IMR-90 (cell line): ENCODE measurements at regions of chr7 and their contacts with region 1.

Region 1: GRCh38 chr7:992709-993607 is 10.0 kb downstream of the CYP2W1 start:
- DNase-seq: peak; percentile 95
- ATAC-seq: peak; percentile 96
- H3K4me3 ChIP-seq: no peak overlapping the region
- H3K27ac ChIP-seq: no peak overlapping the region
- H3K4me1 ChIP-seq: no peaks in the 10 kb centered on the region
- H3K27me3 ChIP-seq: no peaks in the 10 kb centered on the region
- CTCF ChIP-seq: peak; percentile 100
- POLR2A ChIP-seq: 0 out of 2 replicates have a peak, but pooled peaks have one; percentile 45
- RAD21 ChIP-seq: peak; percentile 96

Region 2: DNA sequence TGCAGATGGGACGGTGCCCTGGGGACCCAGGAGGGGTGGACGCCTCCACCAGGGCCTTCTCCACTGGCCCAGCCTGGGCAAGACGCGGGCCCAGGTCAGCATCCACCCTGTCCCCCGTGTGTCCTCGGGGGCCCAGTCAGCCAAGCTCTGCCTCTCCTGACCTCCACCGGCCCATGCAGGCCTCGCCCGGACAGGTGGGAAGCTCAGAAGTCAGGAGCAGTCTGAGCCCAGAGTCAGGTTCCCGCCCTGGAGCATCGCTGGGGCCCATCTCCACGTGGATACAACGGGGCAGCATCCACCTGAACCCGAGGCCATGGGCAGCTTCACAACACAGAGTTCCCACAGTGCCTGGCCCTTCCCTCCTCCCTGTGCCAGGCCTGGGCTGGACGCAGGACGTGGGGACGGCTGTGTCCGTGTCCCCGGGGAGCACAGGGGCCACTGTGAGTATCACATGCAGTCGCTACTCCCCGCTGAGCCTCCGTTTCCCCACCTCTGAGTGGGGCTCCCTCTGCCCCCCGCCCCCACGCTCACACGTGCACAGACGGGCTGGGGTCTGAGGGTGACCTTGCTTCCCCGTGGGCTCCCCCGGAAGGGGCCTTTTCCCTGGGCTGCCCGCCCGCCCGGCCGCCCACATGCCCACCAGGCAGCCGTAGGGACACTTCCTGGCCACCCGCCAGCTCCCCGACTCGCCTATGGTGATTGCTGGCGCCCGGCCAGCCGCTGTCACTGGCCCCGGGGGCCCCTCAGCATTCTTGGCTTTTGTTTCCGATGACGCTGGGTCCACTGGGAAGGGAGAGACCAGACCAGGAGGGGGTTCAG is 537.6 kb before region 1 on chr7:
- CTCF ChIA-PET with region 1: no interaction called
- POLR2A ChIA-PET with region 1: no interaction called
- dilution Hi-C with region 1: no loop called
- in situ Hi-C with region 1: no loop called
- intact Hi-C with region 1: no loop called
- DNase-seq: no peak
- ATAC-seq: no peak
- H3K4me3 ChIP-seq: no peak overlapping the region
- H3K27ac ChIP-seq: no peak overlapping the region
- H3K4me1 ChIP-seq: peaks cover 10% of the 10 kb centered on the region
- H3K27me3 ChIP-seq: peaks cover 22% of the 10 kb centered on the region
- CTCF ChIP-seq: no peak
- POLR2A ChIP-seq: no peak
- RAD21 ChIP-seq: no peak

Region 3: DNA sequence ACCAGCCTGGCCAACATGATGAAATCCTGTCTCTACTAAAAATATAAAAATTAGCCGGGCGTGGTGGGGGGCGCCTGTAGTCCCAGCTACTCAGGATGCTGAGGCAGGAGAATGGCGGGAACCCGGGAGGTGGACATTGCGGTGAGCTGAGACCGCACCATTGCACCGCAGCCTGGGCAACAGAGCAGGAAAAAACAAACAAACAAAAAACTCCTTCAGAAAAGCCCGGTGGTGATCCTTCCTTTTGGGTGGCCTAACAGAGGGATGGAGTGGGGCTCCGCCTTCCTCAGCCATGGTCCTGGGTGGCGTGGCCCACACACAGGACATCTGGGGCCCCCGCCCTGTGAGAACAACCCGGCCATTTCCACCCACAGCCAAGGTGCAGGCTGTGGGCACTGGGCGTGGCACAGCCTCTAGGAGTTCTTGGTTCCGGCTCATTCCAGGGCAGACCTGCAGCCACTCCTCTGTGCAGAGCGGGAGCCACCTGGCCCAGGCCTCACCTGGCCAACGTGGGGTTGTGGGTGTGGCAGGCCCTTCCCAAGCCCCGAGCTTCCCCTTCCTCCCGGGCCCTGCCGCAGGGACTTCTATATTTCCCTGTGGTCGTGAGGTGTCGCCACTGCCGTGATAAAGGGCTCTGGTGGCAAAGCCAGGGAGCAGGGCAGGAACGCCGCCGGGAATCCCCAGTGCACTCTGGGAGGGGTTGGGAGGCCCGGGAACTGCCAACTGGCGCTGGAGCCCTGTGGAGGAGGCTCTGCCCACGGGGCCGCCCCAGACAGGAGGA is 79.0 kb before region 1 on chr7:
- CTCF ChIA-PET with region 1: no interaction called
- POLR2A ChIA-PET with region 1: no interaction called
- dilution Hi-C with region 1: no loop called
- in situ Hi-C with region 1: no loop called
- intact Hi-C with region 1: no loop called
- DNase-seq: no peak
- ATAC-seq: no peak
- H3K4me3 ChIP-seq: no peak overlapping the region
- H3K27ac ChIP-seq: no peak overlapping the region
- H3K4me1 ChIP-seq: 0 out of 2 replicates have a peak, but pooled peaks cover 1% of the 10 kb centered on the region
- H3K27me3 ChIP-seq: no peaks in the 10 kb centered on the region
- CTCF ChIP-seq: no peak
- POLR2A ChIP-seq: no peak
- RAD21 ChIP-seq: no peak

Region 4: DNA sequence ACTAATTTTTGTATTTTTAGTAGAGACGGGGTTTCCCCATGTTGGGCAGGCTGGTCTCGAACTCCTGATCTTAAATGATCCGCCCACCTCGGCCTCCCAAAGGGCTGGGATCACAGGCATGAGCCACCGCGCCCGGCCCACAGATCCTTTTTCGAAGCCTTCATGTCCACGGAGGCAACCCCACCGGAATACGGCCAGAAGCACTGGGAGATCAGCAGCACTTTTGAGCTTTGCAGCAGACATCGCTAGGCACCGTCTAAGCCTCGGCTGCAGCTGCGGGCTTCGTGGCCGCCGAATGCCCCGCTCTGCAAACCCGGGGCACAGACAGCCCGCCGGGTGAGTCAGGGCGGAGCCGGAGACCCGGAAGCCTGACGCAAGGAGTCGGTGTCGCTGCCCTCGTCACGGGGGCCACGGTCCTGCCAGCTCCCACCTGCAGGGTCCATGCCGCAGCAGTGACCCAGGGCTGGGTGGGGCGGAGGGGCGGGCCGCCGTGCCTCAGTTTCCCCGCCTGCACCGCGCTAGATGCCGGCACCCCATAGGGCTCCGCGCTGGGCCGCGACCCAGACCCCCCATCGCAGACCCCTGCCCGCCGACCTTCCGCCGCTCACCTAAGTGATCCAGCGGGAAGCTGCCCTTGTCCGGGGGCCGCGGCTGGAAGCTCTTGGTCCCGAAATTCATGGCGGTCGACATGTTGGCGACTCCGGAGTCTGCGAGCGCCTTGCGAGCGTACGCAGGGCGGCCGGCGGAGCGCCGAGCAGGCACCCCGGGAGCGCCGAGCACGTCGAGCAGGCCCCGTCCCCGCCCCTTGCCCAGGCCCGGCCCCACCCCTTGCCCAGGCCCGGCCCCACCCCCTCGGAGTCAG is 17.9 kb before region 1 on chr7 and contains the start of gene COX19:
- CTCF ChIA-PET with region 1: interaction called, 11 read pairs
- POLR2A ChIA-PET with region 1: no interaction called
- dilution Hi-C with region 1: no loop called
- in situ Hi-C with region 1: no loop called
- intact Hi-C with region 1: no loop called
- DNase-seq: peak; percentile 87
- ATAC-seq: peak; percentile 99
- H3K4me3 ChIP-seq: peak within 1 kb of the TSS; percentile 89
- H3K27ac ChIP-seq: peak within 1 kb of the TSS; percentile 87
- H3K4me1 ChIP-seq: peaks cover 4% of the 10 kb centered on the region
- H3K27me3 ChIP-seq: no peaks in the 10 kb centered on the region
- CTCF ChIP-seq: no peak
- POLR2A ChIP-seq: peak; percentile 85
- RAD21 ChIP-seq: no peak
- total RNA-seq, gene COX19: 3.9 and 6.4 TPM in 2 replicates

Region 5: GRCh38 chr7:1059200-1060091 is 66.5 kb after region 1 on chr7:
- CTCF ChIA-PET with region 1: interaction called, 60 read pairs
- POLR2A ChIA-PET with region 1: no interaction called
- dilution Hi-C with region 1: no loop called
- in situ Hi-C with region 1: loop called (anchors 5 kb)
- intact Hi-C with region 1: no loop called
- DNase-seq: no peak
- ATAC-seq: no peak; the same call in 1 of the 2 replicates
- H3K4me3 ChIP-seq: no peak overlapping the region
- H3K27ac ChIP-seq: no peak overlapping the region
- H3K4me1 ChIP-seq: peaks cover 8% of the 10 kb centered on the region; the same call in 1 of the 2 replicates
- H3K27me3 ChIP-seq: no peaks in the 10 kb centered on the region; the same call in 1 of the 2 replicates
- CTCF ChIP-seq: no peak
- POLR2A ChIP-seq: no peak
- RAD21 ChIP-seq: no peak

Region 6: GRCh38 chr7:1065263-1066260 is 72.6 kb after region 1 on chr7:
- CTCF ChIA-PET with region 1: interaction called, 60 read pairs
- POLR2A ChIA-PET with region 1: no interaction called
- dilution Hi-C with region 1: no loop called
- in situ Hi-C with region 1: loop called (anchors 5 kb)
- intact Hi-C with region 1: loop called (anchors 1 kb)
- DNase-seq: peak; percentile 58
- ATAC-seq: peak; percentile 98
- H3K4me3 ChIP-seq: no peak overlapping the region
- H3K27ac ChIP-seq: no peak overlapping the region
- H3K4me1 ChIP-seq: peaks cover 2% of the 10 kb centered on the region; the same call in 1 of the 2 replicates
- H3K27me3 ChIP-seq: no peaks in the 10 kb centered on the region; the same call in 1 of the 2 replicates
- CTCF ChIP-seq: peak; percentile 97
- POLR2A ChIP-seq: no peak
- RAD21 ChIP-seq: peak; percentile 97

Region 7: DNA sequence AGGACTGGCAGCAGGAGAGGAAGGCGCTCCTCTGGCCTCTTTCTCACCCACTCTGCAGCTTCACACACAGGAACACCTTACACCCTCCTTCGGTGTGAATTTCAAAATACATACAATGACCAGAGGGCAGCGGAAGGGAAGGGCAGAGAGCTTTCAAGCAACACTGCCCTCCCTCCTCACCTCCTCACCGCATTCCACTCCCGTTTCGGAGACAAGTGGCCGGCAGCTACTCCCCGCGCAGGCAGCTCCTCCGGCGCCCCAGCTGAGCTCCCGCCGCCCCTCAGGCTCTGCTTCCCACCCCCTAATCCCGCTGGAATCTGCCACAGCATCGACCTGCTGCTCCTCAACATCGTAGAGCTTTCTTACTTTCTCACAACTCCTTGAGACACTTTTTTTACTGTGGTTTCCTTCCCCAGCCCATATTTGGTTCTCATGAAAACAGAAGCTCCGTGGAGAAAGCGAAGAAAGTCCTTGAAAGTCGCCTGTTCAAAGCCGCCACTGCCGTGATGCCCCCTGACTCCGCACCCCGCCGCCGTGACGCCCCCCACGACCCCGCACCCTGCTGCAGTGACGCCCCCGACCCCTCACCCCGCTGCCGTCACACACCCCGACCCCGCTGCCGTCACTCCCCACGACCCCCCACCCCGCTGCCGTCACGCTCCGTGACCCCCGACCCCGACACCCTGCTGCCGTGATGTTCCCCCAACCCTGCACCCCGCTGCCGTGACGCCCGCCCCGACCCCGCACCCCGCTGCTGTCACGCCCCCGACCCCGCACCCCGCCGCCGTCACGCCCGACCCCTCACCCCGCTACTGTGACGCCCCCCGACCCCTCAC is 80.4 kb after region 1 on chr7:
- CTCF ChIA-PET with region 1: interaction called, 12 read pairs
- POLR2A ChIA-PET with region 1: no interaction called
- dilution Hi-C with region 1: no loop called
- in situ Hi-C with region 1: no loop called
- intact Hi-C with region 1: no loop called
- DNase-seq: no peak
- ATAC-seq: no peak
- H3K4me3 ChIP-seq: no peak overlapping the region
- H3K27ac ChIP-seq: no peak overlapping the region
- H3K4me1 ChIP-seq: no peaks in the 10 kb centered on the region
- H3K27me3 ChIP-seq: no peaks in the 10 kb centered on the region
- CTCF ChIP-seq: no peak
- POLR2A ChIP-seq: no peak
- RAD21 ChIP-seq: no peak

Region 8: DNA sequence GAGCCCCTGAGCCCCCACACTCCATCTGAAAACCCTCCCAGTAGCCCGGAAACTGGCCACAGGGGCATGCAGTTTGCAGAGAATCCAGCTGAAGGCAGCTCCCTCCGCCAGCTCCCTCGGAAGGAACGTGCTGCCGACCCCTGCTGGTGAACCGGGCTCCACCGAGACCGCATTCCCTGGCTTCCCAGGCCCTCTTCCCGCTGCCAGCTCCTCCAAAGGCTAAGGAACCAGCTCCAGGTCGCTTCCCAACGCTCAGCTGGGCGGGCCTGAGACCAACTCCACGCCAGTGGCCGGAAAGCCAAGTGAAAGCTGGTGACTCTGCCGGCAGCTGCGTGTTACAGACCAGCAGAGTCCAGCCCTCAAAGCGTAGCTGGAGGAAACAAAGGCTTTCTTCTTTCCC is 130.8 kb after region 1 on chr7:
- CTCF ChIA-PET with region 1: no interaction called
- POLR2A ChIA-PET with region 1: no interaction called
- dilution Hi-C with region 1: no loop called
- in situ Hi-C with region 1: no loop called
- intact Hi-C with region 1: loop called (anchors 2 kb)
- DNase-seq: peak; percentile 79
- ATAC-seq: peak; percentile 96
- H3K4me3 ChIP-seq: no peak overlapping the region
- H3K27ac ChIP-seq: peak overlapping the region; percentile 10; the same call in 1 of the 2 replicates
- H3K4me1 ChIP-seq: peaks cover 3% of the 10 kb centered on the region
- H3K27me3 ChIP-seq: no peaks in the 10 kb centered on the region
- CTCF ChIP-seq: peak; percentile 69
- POLR2A ChIP-seq: no peak
- RAD21 ChIP-seq: peak; percentile 56

Region 9: GRCh38 chr7:1175967-1176851 is 183.3 kb after region 1 on chr7:
- CTCF ChIA-PET with region 1: interaction called, 3 read pairs
- POLR2A ChIA-PET with region 1: no interaction called
- dilution Hi-C with region 1: no loop called
- in situ Hi-C with region 1: loop called (anchors 10 kb)
- intact Hi-C with region 1: loop called (anchors 1 kb)
- DNase-seq: peak; percentile 52
- ATAC-seq: peak; percentile 96
- H3K4me3 ChIP-seq: no peak overlapping the region
- H3K27ac ChIP-seq: no peak overlapping the region
- H3K4me1 ChIP-seq: 0 out of 2 replicates have a peak, but pooled peaks cover 2% of the 10 kb centered on the region
- H3K27me3 ChIP-seq: peaks cover 2% of the 10 kb centered on the region; the same call in 1 of the 2 replicates
- CTCF ChIP-seq: peak; percentile 86
- POLR2A ChIP-seq: no peak
- RAD21 ChIP-seq: peak; percentile 66

Region 10: DNA sequence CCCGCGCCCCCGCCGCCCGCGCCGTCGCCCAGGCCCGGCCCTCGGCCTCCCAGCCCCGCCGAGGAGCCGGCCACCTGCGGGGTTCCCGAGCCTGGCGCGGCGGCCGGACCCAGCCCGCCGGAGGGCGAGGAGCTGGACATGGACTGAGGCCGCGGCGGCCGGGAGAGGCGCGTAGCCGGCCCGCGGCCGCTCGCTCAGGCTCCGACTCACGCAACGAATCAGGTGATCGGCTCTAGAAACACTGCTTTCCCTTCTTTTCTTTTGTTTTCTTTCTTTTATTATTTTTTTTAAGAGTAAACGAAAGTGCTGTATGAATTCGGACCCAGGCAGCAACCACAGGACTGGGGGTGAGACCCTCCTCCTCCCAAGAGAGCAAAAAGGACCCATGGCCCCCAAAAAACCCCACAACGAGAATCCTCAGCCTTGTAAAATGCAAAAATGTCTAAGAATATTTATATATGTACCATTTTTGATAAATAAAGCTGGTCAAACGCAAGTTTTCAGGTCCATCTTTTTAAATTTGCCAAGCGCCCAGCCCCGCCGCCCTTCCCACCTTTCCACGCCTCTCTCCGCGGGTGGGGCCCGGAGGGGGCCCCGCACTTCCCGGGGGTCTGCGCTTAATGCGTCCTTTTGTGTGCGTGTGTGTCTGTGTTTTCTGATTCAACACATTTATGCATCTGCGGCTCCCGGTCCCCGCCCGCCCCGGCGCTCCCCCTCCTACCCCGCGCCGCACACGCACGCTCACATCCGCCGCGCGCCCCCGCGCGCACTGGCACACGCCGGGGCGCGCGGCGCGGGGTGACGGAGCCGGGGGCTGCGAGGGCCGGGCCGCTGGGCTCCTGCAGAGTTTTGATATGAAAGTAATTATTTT is 244.1 kb after region 1 on chr7:
- CTCF ChIA-PET with region 1: no interaction called
- POLR2A ChIA-PET with region 1: no interaction called
- dilution Hi-C with region 1: no loop called
- in situ Hi-C with region 1: no loop called
- intact Hi-C with region 1: no loop called
- DNase-seq: no peak
- ATAC-seq: no peak
- H3K4me3 ChIP-seq: no peak overlapping the region
- H3K27ac ChIP-seq: no peak overlapping the region
- H3K4me1 ChIP-seq: no peaks in the 10 kb centered on the region
- H3K27me3 ChIP-seq: peaks cover 89% of the 10 kb centered on the region
- CTCF ChIP-seq: no peak
- POLR2A ChIP-seq: no peak
- RAD21 ChIP-seq: no peak